Ascending aorta (tissue), 2 donors: ENCODE measurements at regions of chr15 and their contacts with region 1.

Region 1: DNA sequence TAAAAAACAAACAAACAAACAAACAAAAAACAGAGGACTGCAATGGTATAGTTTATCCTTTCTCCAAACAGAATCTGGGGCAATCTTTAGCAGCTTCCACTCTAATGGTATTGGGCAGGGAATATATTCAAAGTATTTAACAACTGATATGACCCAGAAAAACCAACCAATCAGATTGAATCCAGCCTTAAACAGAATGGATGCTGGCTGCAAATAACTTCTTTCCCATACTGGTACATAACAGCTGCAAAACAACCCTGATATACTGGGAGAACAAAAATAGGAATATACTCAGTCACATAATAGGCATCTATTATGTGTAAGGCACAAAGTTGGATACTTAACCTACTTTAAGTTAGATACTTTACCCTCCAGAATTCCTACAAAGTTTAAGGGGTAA is 49.1 kb downstream of the UBR1 start:
- DNase-seq: no peak
- H3K4me3 ChIP-seq: no peak overlapping the region
- H3K27ac ChIP-seq: no peak overlapping the region
- H3K4me1 ChIP-seq: no peaks in the 10 kb centered on the region
- H3K27me3 ChIP-seq: no peaks in the 10 kb centered on the region
- CTCF ChIP-seq: no peak

Region 2: DNA sequence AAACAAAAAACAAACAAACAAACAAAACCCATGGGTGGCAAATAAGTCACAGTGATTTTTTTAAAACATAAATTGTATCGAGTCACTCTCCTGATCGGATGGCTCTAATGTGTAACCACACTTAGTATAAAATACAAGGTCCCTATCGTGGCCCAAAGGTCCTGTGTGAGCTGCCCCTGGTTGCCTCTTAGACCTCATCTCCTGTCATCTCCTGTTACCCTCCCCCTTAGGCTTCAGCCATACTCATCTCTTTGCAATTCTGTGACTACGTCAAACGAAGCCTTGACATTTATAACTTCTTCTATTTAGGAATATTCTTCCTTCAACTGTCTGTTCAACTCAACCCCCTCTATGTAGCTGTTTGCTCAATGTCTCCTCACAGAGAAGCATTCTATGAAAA is 92.2 kb before region 1 on chr15:
- intact Hi-C with region 1: loop called (anchors 10 kb)
- DNase-seq: no peak
- H3K4me3 ChIP-seq: no peak overlapping the region
- H3K27ac ChIP-seq: no peak overlapping the region
- H3K4me1 ChIP-seq: no peaks in the 10 kb centered on the region
- H3K27me3 ChIP-seq: no peaks in the 10 kb centered on the region
- CTCF ChIP-seq: no peak

Region 3: GRCh38 chr15:43008150-43008549 is 48.5 kb before region 1 on chr15:
- intact Hi-C with region 1: no loop called
- DNase-seq: no peak
- H3K4me3 ChIP-seq: no peak overlapping the region
- H3K27ac ChIP-seq: no peak overlapping the region
- H3K4me1 ChIP-seq: no peaks in the 10 kb centered on the region
- H3K27me3 ChIP-seq: no peaks in the 10 kb centered on the region
- CTCF ChIP-seq: no peak